ENCODE measurements at regions of chr2 and their contacts with region 1.

Region 1: GRCh38 chr2:95076784-95077529 is 44.7 kb downstream of the MRPS5 start:
- DNase-seq: no peak
- H3K4me3 ChIP-seq: peak overlapping the region; percentile 58
- H3K27ac ChIP-seq: no peak overlapping the region
- H3K27me3 ChIP-seq: peaks cover 20% of the 10 kb centered on the region
- CTCF ChIP-seq: peak; percentile 88

Region 2: GRCh38 chr2:95022309-95023221 is 54.4 kb before region 1 on chr2:
- CTCF ChIA-PET with region 1: interaction called, 72 read pairs
- POLR2A ChIA-PET with region 1: no interaction called
- DNase-seq: peak; percentile 21
- H3K4me3 ChIP-seq: no peak overlapping the region
- H3K27ac ChIP-seq: no peak overlapping the region
- H3K27me3 ChIP-seq: peaks cover 51% of the 10 kb centered on the region
- CTCF ChIP-seq: peak; percentile 98

Region 3: GRCh38 chr2:95032868-95033603 is 43.9 kb before region 1 on chr2:
- CTCF ChIA-PET with region 1: no interaction called
- POLR2A ChIA-PET with region 1: no interaction called
- DNase-seq: no peak
- H3K4me3 ChIP-seq: no peak overlapping the region
- H3K27ac ChIP-seq: no peak overlapping the region
- H3K27me3 ChIP-seq: peaks cover 10% of the 10 kb centered on the region
- CTCF ChIP-seq: no peak

Region 4: GRCh38 chr2:95043300-95044093 is 33.5 kb before region 1 on chr2:
- CTCF ChIA-PET with region 1: interaction called, 20 read pairs
- POLR2A ChIA-PET with region 1: no interaction called
- DNase-seq: peak; percentile 83
- H3K4me3 ChIP-seq: peak overlapping the region; percentile 17; the same call in 1 of the 2 replicates
- H3K27ac ChIP-seq: peak overlapping the region; percentile 25
- H3K27me3 ChIP-seq: no peaks in the 10 kb centered on the region
- CTCF ChIP-seq: no peak

Region 5: GRCh38 chr2:95053543-95053942 is 23.4 kb before region 1 on chr2:
- CTCF ChIA-PET with region 1: interaction called, 24 read pairs
- POLR2A ChIA-PET with region 1: no interaction called
- DNase-seq: no peak
- H3K4me3 ChIP-seq: no peak overlapping the region
- H3K27ac ChIP-seq: no peak overlapping the region
- H3K27me3 ChIP-seq: peaks cover 22% of the 10 kb centered on the region
- CTCF ChIP-seq: no peak

Region 6: DNA sequence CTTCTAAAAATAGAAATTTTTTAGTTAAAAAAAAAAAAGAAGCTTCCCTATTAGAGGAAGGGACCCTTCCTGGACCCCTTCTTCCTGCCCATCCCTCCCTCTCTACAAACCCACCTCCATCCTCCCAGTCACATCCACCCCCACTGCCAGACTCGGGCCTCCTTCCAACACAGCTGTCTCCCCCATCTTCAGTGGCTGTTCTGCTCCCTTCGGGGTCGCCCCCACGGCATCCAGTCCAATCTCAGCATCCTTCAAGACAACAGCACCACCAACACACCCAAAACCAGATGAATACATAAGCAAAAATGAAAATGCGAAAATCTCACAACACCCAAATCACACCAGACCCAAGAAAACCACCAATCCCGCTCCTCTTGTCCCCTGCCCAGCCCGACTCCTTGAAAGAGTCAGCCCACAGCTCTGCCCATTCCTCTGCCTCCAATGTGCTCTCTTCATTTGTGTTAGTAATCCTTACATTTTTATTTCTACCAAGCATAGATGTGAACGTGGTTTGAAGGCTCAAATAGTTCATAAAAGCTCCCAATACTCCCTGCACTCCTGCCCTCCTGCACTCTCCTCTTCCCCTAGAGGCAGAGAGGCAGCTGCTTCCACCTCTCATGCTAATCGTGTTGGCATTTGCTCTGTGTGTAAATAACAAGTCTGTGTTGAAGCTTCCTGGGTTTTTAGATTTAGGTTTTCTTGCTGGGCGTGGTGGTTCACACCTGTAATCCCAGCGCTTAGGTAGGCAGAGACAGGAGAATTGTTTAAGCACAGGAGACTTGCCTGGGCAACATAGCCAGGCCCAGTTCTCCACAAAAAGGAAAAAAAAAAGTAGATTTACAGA is 14.5 kb before region 1 on chr2:
- CTCF ChIA-PET with region 1: interaction called, 42 read pairs
- POLR2A ChIA-PET with region 1: interaction called, 5 read pairs
- DNase-seq: no peak
- H3K4me3 ChIP-seq: no peak overlapping the region
- H3K27ac ChIP-seq: no peak overlapping the region
- H3K27me3 ChIP-seq: peaks cover 6% of the 10 kb centered on the region
- CTCF ChIP-seq: no peak

Region 7: GRCh38 chr2:95091885-95092555 is 15.1 kb after region 1 on chr2:
- CTCF ChIA-PET with region 1: interaction called, 11 read pairs
- POLR2A ChIA-PET with region 1: interaction called, 6 read pairs
- DNase-seq: no peak
- H3K4me3 ChIP-seq: no peak overlapping the region
- H3K27ac ChIP-seq: no peak overlapping the region
- H3K27me3 ChIP-seq: no peaks in the 10 kb centered on the region
- CTCF ChIP-seq: no peak

Region 8: GRCh38 chr2:95115418-95115817 is 38.5 kb after region 1 on chr2:
- CTCF ChIA-PET with region 1: interaction called, 24 read pairs
- POLR2A ChIA-PET with region 1: no interaction called
- DNase-seq: peak; percentile 21
- H3K4me3 ChIP-seq: no peak overlapping the region
- H3K27ac ChIP-seq: no peak overlapping the region
- H3K27me3 ChIP-seq: no peaks in the 10 kb centered on the region
- CTCF ChIP-seq: peak; percentile 89

Measured in AG04450 (cell line).